ENCODE measurements at regions of chr11 and their contacts with region 1.

Region 1: GRCh38 chr11:250740-251299 is 14.0 kb downstream of the PSMD13 start:
- DNase-seq: peak; percentile 93
- H3K4me3 Mint-ChIP-seq: no peak overlapping the region
- H3K27ac Mint-ChIP-seq: peak overlapping the region; percentile 81
- H3K4me1 Mint-ChIP-seq: peaks cover 13% of the 10 kb centered on the region
- H3K27me3 Mint-ChIP-seq: no peaks in the 10 kb centered on the region

Region 2: DNA sequence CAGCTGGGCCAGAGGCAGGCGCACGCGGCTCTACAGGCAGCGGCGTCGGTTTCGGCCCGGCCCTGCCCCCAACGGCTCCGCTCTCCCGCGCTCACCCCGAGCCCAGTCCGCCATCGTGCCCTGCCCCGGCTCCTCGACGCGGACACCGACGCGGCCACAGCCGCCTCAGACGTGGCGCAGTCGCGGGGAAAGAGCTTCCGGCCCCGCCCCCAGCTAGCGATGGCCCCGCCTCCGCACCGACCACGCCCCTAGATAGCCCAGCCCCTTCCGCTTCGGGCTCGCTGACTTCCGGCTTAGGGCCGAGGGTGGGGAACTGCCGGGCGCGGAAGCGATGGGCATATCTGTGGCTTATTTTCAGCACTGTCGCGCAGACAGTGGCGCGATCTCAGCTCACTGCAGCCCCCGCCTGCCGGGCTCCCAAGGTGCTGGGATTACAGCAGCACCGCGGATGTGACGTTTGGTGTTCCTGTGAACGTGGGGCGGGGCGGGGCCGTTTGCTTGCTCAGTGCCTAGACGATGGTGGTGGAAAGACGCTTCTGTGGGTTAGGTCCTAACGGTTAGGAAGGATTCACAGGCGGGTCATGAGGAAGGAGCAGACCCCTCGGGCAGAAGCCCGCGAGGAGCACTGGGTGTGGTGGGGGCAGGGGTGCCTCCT is 43.5 kb before region 1 on chr11 and contains the starts of genes BET1L and RIC8A:
- CTCF ChIA-PET with region 1: interaction called, 10 read pairs
- intact Hi-C with region 1: no loop called
- DNase-seq: peak; percentile 98
- H3K4me3 Mint-ChIP-seq: peak within 1 kb of the TSS; percentile 96
- H3K27ac Mint-ChIP-seq: peak within 1 kb of the TSS; percentile 98
- H3K4me1 Mint-ChIP-seq: peaks cover 69% of the 10 kb centered on the region
- H3K27me3 Mint-ChIP-seq: no peaks in the 10 kb centered on the region
- total RNA-seq, gene BET1L: 50.4 to 51.6 TPM
- total RNA-seq, gene RIC8A: 74.9 to 85.0 TPM

Region 3: DNA sequence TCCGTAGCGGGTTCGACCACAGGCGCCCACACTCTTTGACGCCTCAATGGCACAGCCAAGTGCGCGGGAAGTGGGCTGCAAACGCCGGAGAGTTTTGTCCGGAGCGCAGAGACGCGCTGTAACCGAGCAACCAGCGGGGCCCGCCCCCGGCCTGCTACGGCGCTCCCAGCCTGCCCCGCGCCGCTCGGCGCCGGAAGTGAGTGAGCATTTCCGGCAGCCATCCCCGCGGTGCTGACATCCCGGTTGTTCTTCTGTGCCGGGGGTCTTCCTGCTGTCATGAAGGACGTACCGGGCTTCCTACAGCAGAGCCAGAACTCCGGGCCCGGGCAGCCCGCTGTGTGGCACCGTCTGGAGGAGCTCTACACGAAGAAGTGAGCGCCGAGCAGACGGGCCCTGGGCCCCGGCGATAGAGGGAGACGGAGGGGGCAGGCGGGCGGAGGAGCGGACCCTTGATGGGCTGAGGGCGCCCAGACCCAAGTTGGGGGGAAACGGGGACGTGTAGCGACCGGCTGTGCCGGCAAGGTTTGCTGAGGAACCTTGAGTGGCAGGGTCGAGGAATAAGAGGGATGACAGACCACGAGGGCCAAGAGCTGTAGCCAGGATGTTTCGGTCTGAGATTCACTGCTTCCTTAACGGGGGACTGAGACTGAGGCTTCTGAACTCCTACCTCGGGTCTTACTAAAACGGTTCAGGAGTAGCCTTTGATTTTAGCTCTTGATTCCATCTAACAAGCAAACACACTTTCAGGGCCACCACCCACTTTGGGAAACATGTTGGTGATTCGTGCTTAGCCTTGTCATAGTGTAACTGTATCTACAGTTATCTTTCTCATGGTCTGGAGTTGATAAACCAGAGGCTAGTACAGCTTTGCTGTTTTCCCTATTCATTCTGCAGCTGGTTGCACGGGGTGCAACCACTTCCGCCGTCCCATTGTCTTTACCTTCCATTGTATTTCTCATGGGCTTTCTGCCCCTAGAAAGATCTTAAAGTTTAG is 13.7 kb before region 1 on chr11 and contains the start of gene PSMD13:
- CTCF ChIA-PET with region 1: interaction called, 28 read pairs
- intact Hi-C with region 1: loop called (anchors 1 kb)
- DNase-seq: peak; percentile 89
- H3K4me3 Mint-ChIP-seq: peak within 1 kb of the TSS; percentile 85
- H3K27ac Mint-ChIP-seq: peak within 1 kb of the TSS; percentile 95
- H3K4me1 Mint-ChIP-seq: peaks cover 45% of the 10 kb centered on the region
- H3K27me3 Mint-ChIP-seq: no peaks in the 10 kb centered on the region
- total RNA-seq, gene PSMD13: 206 to 210 TPM

Region 4: GRCh38 chr11:279966-280582 is 29.3 kb after region 1 on chr11:
- CTCF ChIA-PET with region 1: interaction called, 14 read pairs
- intact Hi-C with region 1: no loop called
- DNase-seq: peak; percentile 65
- H3K4me3 Mint-ChIP-seq: peak overlapping the region; percentile 75
- H3K27ac Mint-ChIP-seq: peak overlapping the region; percentile 63
- H3K4me1 Mint-ChIP-seq: peaks cover 45% of the 10 kb centered on the region
- H3K27me3 Mint-ChIP-seq: peaks cover 19% of the 10 kb centered on the region

Region 5: DNA sequence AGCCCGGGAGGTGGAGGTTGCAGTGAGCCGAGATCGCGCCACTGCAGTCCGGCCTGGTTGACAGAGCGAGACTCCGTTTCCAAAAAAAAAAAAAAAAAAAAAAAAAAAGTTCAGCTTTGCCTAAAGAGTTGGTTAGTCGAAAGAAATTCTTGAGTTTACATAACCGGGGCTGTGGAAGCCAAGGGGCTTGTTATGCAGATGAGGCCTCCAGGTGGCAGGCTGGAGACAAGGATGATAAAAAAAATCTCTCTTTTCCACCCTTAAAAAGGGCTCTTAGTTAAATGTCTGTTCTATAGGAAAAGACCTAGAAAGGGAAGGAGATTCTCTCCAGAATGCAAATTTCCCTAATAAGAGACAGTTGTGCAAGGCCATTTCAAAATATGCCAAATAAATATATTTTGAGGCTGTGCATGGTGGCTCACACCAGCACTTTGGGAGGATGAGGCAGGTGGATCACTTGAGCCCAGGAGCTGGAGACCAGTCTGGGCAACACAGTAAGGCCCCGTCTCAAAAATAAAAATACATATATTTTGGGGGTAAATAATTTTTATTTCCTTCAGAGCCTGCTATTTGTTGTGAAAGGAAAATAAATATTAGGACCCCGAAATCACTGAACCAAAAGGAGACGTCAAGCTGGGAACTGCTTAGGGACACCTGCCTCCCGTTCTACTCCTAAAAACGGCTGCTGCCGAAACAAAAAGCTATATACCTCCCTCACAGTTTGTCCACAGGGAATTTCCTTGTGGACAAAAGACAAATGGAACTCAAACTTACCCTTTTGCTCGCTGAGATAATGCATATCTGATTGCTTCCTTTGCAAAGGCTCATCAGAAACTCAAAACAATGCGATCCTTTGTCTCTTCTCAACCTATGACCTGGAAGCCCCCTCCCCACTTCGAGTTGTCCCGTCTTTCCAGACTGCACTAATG is 54.4 kb after region 1 on chr11:
- CTCF ChIA-PET with region 1: interaction called, 26 read pairs
- intact Hi-C with region 1: loop called (anchors 1 kb)
- DNase-seq: peak; percentile 85
- H3K4me3 Mint-ChIP-seq: no peak overlapping the region
- H3K27ac Mint-ChIP-seq: no peak overlapping the region
- H3K4me1 Mint-ChIP-seq: peaks cover 38% of the 10 kb centered on the region
- H3K27me3 Mint-ChIP-seq: peaks cover 8% of the 10 kb centered on the region

Region 6: DNA sequence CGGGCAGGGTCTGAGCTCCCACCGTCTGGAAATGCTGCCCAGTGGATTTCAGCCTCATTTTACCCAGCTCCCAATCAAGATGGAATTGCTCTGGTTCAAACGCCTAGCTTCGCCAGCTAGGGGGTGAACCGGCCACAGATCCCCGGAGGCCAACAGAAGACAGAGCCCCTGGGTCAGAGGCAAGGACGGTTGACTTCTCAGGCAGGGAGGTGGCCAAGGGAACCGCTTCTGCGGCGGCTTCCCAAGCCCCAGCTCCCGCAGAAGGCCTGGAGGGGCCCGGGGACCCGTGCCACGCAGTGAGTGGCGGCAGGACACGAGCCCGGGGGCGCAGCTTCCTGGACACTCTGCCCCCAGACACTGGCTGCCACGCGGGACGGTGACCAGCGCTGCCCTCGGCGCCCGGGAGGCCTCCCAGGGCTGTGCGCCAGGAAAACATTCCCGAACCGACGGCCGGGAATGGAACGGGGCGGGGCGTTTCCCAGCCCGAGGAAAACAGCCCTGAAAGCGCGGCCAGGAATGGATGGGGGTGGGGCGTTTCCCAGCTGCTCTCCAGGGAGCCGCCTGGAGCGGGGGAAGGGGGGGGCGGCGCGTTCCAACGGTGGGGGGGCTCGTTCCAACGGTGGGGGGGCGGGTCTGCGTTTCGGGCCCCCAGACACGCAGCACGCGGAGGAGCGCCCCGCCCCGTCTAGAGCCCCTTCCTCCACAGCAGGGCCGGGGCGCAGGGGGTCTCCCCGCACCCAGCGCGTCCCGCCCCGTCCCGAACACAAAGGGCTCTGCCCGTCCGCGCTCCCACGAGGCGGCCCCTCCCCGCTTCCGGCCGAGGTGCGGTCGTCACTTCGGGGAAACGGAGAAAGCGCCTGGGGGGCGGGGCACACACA is 105.0 kb after region 1 on chr11:
- CTCF ChIA-PET with region 1: interaction called, 8 read pairs
- intact Hi-C with region 1: loop called (anchors 2 kb)
- DNase-seq: peak; percentile 93
- H3K4me3 Mint-ChIP-seq: peak overlapping the region; percentile 94
- H3K27ac Mint-ChIP-seq: peak overlapping the region; percentile 99
- H3K4me1 Mint-ChIP-seq: peaks cover 36% of the 10 kb centered on the region
- H3K27me3 Mint-ChIP-seq: no peaks in the 10 kb centered on the region